Activated T-helper 1 cell treated with anti-CD3 and anti-CD28 coated beads, Interleukin-12 subunit alpha, Interleukin-12 subunit beta, Interleukin-2, Interleukin-4 antibody, amounts not matched to agents 30 ng/mL and 10 ng/mL and 1 ng/mL, durations not matched to agents 14 hours and 24 hours and 36 hours (primary cell): ENCODE measurements at regions of chr4 and their contacts with region 1.

Region 1: GRCh38 chr4:142549726-142550463 is 296.2 kb downstream of the INPP4B start:
- DNase-seq: no peak
- H3K4me3 Mint-ChIP-seq: no peak overlapping the region
- H3K27ac Mint-ChIP-seq: peak overlapping the region; percentile 10
- H3K4me1 Mint-ChIP-seq: peaks cover 41% of the 10 kb centered on the region
- H3K27me3 Mint-ChIP-seq: no peaks in the 10 kb centered on the region

Region 2: DNA sequence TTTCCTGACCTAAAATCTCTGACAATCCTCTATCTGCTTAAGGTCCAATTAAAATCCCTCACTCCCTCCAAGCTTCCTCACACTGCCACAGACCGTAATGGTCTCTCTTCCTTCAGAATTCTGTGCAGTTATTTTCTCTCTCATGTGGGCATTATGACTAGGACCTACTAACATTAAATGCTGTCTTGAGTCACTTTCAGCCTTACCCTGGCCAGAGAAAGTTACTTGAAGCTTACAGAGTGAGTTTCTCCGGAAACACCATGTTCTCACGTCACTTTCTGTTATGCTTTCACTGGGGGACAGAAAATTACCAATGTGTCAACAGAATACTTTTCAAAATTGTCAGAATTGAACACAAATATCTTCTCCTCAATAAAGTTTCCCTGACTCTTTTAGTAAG is 24.4 kb after region 1 on chr4:
- intact Hi-C with region 1: no loop called
- DNase-seq: no peak
- H3K4me3 Mint-ChIP-seq: no peak overlapping the region
- H3K27ac Mint-ChIP-seq: no peak overlapping the region
- H3K4me1 Mint-ChIP-seq: peaks cover 28% of the 10 kb centered on the region
- H3K27me3 Mint-ChIP-seq: no peaks in the 10 kb centered on the region

Region 3: GRCh38 chr4:142824368-142824767 is 274.5 kb after region 1 on chr4:
- intact Hi-C with region 1: loop called (anchors 5 kb)
- DNase-seq: no peak
- H3K4me3 Mint-ChIP-seq: no peak overlapping the region
- H3K27ac Mint-ChIP-seq: no peak overlapping the region
- H3K4me1 Mint-ChIP-seq: peaks cover 5% of the 10 kb centered on the region
- H3K27me3 Mint-ChIP-seq: peaks cover 2% of the 10 kb centered on the region